ENCODE measurements at regions of chr1 and their contacts with region 1.

Region 1: DNA sequence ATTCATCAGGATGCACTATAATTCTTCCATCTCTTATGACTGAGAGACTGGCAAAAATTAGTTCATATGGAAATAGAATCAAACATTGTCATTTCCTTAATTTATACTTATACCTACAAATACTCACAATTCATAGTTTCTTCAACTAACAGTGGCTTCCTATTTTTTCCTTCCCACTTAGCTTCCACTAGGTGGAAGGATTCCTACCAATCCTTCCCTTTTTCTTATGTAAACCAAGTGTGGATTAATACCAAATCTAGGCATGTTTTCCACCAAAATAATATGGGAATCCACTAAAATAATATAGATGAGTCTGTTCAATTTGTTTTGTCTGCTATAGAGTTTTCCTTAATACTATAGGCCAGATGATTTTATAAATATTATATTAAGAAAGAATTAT is 1537.1 kb downstream of the PLA2G4A start:
- DNase-seq: no peak
- H3K4me3 ChIP-seq: no peak overlapping the region
- CTCF ChIP-seq: no peak

Region 2: DNA sequence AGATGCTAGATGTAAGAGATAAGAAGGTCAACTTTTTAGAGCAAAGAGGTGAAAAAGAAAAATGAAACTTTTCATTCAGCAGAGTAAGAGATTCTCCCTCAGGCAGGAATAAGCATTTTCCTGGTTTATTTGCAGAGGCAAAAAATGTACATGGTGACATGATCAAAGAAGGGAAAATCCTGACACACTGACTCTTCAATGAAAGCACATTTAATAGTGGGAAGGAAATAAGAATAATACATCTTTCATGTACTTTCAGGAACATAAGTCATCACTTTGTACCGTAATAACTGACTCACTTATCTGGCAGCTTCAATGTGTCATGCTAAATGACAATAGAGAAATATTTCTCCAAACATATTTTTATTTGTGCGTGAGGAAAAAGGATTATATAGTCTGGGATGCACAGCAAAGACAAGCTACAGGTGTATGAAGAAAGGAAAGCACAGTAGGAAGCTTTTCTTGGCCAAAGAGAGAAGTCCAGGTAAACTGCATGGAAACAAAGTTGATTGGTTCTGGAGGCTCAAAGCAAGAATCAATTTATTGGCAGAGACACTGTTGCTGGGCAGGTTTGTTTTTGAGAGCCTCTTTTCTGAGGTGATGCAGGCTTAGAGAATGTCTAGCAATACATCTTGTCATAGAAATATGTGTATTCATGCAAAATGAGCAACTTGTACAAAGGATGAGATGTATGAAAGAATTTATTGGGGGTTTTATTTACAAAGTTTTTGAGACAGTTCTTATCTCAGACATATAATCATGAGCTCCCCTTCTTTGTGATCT is 128.1 kb before region 1 on chr1:
- in situ Hi-C with region 1: no loop called
- DNase-seq: no peak
- H3K4me3 ChIP-seq: no peak overlapping the region
- CTCF ChIP-seq: no peak

Region 3: DNA sequence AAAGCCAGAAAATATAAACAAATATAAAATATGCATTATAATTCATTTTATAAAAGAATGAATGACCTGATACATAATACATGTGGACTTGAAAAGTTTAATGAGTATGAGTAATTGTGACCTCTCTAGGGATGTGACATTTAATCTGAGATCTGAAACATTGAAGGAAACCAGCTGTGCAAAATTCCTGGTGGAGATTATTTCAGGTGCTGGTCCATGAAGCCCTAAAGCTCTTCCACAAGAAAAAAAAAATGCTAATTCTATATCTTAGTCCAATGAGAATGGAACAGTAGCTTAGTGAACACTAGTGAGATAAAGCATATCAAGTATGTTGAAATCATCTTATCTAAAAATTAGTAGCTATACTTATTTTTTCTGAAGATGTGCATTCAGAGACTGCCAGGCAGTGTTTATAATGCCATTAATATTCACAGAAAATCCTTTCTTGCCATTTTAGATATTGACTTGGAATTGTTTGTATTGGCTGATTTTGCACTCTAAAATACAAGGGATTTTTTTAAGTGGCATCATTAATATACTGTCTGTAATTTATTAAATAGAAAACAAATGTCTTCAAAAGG is 51.2 kb before region 1 on chr1:
- in situ Hi-C with region 1: loop called (anchors 5 kb)
- DNase-seq: no peak
- H3K4me3 ChIP-seq: no peak overlapping the region
- CTCF ChIP-seq: no peak

Measured in astrocyte of the cerebellum (primary cell).